ENCODE measurements at regions of chr7 and their contacts with region 1.

Region 1: DNA sequence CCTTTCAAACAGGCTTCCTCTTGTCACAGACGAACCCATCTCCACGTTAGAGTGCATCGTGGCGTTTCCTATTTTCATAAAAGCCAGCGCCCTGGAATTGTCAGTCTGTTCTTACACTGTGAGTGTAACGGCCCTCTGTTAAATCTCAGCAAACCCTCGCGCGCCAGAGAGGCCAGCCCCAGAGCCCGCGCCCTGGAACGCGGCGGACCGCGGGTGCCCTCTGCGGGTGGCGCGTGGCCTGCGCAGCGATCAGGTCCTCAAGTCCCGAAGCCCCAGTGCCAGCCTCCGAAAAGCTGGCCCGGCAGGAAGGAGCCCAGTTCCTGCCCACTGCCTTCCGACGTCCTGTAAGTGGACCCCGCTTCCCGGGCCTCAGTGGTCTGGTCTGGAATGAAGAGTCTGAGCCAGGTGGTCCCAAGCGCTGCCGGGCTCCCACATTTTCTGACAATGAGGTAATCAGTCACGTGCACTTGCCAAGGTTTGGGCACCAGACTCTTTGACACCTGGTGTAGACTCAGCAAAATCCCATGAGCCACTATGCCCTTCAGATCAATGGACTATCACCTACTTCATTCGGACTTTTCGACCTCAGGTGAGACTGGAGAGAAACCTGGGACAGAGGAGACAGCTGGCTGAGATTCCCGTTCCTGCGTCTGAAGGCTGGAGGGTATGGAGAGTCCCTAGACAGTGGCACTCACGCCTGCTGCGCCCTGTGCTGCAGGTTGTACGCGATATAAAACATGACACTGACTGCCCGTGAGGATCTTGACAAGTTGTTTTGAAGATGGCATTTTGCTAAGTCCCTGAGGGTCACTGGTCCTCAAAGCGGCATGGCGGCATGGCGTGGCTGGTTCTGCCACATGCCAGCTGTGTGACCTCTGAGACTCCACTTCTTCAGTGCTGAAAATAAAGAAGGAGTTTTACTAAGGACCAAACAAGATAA is 109.4 kb upstream of the LANCL2 start:
- DNase-seq: peak; percentile 86 to 90
- ATAC-seq: peak; percentile 92 to 97 (median 96)
- H3K4me3 ChIP-seq: peak overlapping the region; percentile 80
- H3K27ac ChIP-seq: peak overlapping the region; percentile 37
- H3K4me1 ChIP-seq: peaks cover 3% of the 10 kb centered on the region
- H3K27me3 ChIP-seq: peaks cover 0 to 3% (median 0%) of the 10 kb centered on the region in 3 donors
- CTCF ChIP-seq: peak; percentile 83

Region 2: DNA sequence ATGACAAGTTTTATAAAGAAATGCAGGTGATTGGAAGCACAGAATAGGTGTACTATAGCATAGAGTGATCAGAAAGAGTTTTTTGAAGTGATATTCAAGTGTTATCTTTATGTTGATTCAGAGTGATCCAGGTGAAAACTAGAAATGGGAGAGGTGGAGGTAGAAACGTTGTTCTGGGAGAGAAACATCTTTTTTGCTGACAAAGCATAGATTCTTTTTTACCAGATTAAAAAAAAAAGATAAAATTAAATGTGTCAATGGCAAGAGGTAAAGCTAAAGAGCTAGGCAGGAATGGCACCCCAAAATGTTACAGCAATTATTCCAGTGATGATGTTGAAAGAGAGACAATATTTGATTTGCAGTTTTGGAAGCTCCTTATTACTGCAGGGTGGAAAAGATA is 726.2 kb before region 1 on chr7:
- intact Hi-C with region 1: no loop called
- DNase-seq: no peak
- ATAC-seq: no peak
- H3K4me3 ChIP-seq: no peak overlapping the region
- H3K27ac ChIP-seq: no peak overlapping the region
- H3K4me1 ChIP-seq: no peaks in the 10 kb centered on the region
- H3K27me3 ChIP-seq: no peaks in the 10 kb centered on the region
- CTCF ChIP-seq: no peak

Region 3: GRCh38 chr7:54773472-54774399 is 482.0 kb before region 1 on chr7:
- intact Hi-C with region 1: loop called (anchors 1 to 2 kb)
- DNase-seq: peak; percentile 78 to 89
- ATAC-seq: peak; percentile 93 to 99 (median 97)
- H3K4me3 ChIP-seq: peak overlapping the region; percentile 62
- H3K27ac ChIP-seq: no peak overlapping the region
- H3K4me1 ChIP-seq: no peaks in the 10 kb centered on the region
- H3K27me3 ChIP-seq: peaks cover 0 to 4% (median 1%) of the 10 kb centered on the region in 3 donors
- CTCF ChIP-seq: peak; percentile 83

Region 4: DNA sequence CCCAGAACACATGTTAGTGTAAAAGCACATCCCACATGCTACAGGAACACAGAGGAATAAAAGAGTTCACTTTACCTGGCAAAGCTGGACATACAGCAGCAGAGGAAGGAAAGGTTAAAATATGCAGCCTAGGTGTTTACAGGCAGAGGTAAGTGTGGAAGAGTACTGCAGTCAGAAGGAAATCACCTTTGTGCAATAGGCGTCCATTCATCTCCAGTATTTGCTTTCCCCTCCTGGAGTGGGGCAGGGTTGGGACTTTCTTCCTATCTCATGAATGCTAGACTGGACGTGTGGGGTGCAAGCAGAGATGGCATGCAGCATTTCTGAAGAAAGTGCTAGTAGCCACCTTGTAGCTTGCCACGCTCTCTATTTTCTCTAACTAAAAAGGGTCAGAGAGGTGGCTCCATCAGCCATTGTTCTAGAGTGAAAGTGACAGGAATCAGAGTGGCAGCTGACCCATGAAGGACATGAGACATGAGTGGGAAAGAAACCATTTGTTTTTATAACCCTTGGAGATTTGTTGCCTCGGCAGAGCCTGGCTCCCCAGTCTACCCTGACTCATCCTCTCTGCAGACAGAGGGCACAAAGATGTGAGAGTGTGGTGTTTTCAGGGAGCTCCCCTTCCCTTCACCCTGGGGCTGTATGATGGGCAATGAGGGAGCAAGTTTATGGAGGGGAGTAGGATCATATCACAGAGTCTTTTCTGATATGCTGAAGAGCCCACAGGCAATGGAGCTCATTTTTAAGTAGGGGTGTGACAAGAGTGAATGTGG is 395.6 kb before region 1 on chr7:
- intact Hi-C with region 1: loop called in 1 of 2 experiments (anchors 10 kb)
- DNase-seq: no peak
- ATAC-seq: no peak
- H3K4me3 ChIP-seq: no peak overlapping the region
- H3K27ac ChIP-seq: no peak overlapping the region
- H3K4me1 ChIP-seq: no peaks in the 10 kb centered on the region
- H3K27me3 ChIP-seq: no peaks in the 10 kb centered on the region
- CTCF ChIP-seq: no peak

Region 5: DNA sequence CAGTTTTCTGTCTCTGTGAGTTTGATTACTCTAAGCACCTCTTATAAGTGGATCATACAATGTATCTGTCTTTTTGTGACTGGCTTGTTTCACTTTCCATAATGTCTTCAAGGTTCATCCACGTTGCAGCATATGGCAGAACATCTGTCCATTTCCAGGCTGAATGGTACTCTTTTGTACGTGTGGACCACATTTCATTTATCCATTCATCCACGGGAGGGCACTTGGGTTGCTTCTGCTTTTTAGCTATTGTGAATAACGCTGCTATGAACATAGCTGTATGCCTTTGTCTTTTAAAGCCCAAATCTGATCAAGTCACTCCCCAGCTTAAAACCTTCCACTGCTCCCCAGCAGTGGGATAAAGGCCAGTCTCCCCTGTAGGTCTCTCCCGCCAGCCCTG is 205.5 kb before region 1 on chr7:
- intact Hi-C with region 1: loop called in 1 of 2 experiments (anchors 2 kb)
- DNase-seq: no peak
- ATAC-seq: no peak
- H3K4me3 ChIP-seq: no peak overlapping the region
- H3K27ac ChIP-seq: no peak overlapping the region
- H3K4me1 ChIP-seq: peaks cover 61% of the 10 kb centered on the region
- H3K27me3 ChIP-seq: no peaks in the 10 kb centered on the region
- CTCF ChIP-seq: no peak

Region 6: GRCh38 chr7:55192718-55193117 is 63.0 kb before region 1 on chr7:
- intact Hi-C with region 1: loop called in 1 of 2 experiments (anchors 5 kb)
- DNase-seq: no peak
- ATAC-seq: no peak
- H3K4me3 ChIP-seq: no peak overlapping the region
- H3K27ac ChIP-seq: peak overlapping the region; percentile 41
- H3K4me1 ChIP-seq: peaks cover 14% of the 10 kb centered on the region
- H3K27me3 ChIP-seq: no peaks in the 10 kb centered on the region
- CTCF ChIP-seq: no peak

Measured in psoas muscle (tissue), 8 donors.